CD4-positive, alpha-beta T cell (primary cell): ENCODE measurements at regions of chr19 and their contacts with region 1.

Region 1: DNA sequence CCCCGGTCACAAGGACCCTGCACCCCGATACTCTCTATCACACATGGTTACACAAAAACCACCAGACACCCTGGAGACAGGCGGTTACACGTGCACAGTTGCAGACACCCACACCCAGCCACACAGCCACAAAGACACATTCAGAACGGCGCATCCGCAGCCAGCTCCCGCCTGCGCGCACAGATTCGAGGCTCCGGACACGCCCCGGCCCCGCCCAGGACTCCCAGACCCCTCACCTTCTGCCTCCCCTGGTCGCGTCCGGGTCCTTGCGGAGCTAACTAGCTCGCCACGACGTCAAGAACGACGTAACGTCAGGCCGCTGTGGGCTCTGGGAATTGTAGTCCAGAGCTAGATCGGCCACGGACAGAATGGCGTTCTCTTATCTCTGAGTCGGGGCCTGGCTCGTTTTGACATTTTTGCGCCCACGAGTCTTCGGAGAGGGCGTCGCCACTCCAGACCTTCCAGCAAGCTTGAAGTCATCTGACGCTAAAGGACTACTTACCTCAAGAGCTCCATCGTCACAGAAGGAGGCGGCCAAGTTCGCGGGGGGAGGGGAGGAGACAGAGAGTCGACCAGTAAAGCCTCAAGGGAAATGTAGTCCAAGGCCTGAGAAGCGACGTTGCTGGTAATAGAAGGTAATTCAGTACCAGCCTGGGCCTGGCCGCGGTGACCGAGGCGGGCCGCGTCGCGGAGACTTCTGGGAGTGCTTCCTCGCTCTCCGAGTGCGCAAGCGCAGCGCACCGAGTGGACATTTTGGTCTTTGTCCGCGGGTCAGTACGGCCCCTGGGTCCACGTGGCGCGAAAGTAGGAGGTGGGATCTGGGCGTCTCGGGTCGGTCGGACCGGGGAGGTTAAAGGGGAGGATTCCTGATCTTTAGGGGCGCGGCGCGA is at the starts of genes ZNF146 and ZNF565:
- DNase-seq: peak; percentile 90 to 99 (median 94)
- ATAC-seq: peak; percentile 84
- H3K4me3 ChIP-seq: peak within 1 kb of the TSS; percentile 86
- H3K4me3 Mint-ChIP-seq: no peak within 1 kb of the TSS
- H3K27ac ChIP-seq: peak within 1 kb of the TSS; percentile 93 to 99
- H3K27ac Mint-ChIP-seq: no peak within 1 kb of the TSS
- H3K4me1 ChIP-seq: peaks cover 28% of the 10 kb centered on the region
- H3K4me1 Mint-ChIP-seq: peaks cover 17% of the 10 kb centered on the region
- H3K27me3 ChIP-seq: no peaks in the 10 kb centered on the region
- H3K27me3 Mint-ChIP-seq: no peaks in the 10 kb centered on the region
- CTCF ChIP-seq: no peak
- total RNA-seq, gene ZNF146: 13.6 to 13.7 TPM
- total RNA-seq, gene ZNF565: 7.6 to 8.5 TPM

Region 2: DNA sequence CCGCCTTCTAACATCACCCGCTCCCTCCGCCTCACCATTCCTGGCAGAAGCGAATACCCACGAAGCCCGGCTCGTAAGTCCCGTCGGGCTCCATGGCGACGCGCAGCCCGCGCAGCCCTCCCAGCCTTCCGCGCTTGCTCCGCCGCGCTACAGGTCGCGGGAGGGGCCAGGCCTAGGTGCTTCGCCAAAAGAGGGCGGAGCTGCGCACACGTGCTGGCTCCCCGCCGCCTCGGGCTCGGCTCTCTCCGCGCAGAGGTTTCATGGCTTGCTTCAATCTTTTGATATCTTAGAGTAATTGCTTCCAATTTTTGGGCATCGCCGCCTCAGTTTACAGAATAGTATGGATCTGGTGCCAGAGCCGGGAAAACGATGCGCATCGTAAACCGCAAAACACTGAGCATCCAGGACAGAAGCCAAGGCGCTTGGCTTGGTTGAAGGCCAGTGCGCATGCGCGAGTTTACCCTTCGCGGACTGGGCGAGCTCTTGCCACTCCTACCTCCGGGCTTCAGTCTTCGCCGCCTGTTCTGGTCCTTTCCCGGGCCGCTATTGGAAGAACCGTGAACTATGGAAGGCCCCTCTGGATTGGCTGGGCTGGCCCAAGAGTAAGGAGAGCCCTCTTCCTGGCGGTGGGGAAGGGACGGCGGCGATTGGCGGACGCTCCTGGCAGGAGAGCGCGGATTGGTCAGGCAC is 99.7 kb before region 1 on chr19 and contains the start of gene POLR2I:
- CTCF ChIA-PET with region 1: interaction called, 3 read pairs
- POLR2A ChIA-PET with region 1: interaction called, 34 read pairs
- intact Hi-C with region 1: no loop called
- DNase-seq: peak; percentile 96 to 100 (median 99)
- ATAC-seq: peak; percentile 86
- H3K4me3 ChIP-seq: peak within 1 kb of the TSS; percentile 97
- H3K4me3 Mint-ChIP-seq: peak within 1 kb of the TSS; percentile 94
- H3K27ac ChIP-seq: peak within 1 kb of the TSS; percentile 87 to 92
- H3K27ac Mint-ChIP-seq: peak within 1 kb of the TSS; percentile 94
- H3K4me1 ChIP-seq: peaks cover 40% of the 10 kb centered on the region
- H3K4me1 Mint-ChIP-seq: peaks cover 42% of the 10 kb centered on the region
- H3K27me3 ChIP-seq: no peaks in the 10 kb centered on the region
- H3K27me3 Mint-ChIP-seq: no peaks in the 10 kb centered on the region
- CTCF ChIP-seq: no peak
- total RNA-seq, gene POLR2I: 29.2 to 31.1 TPM

Region 3: DNA sequence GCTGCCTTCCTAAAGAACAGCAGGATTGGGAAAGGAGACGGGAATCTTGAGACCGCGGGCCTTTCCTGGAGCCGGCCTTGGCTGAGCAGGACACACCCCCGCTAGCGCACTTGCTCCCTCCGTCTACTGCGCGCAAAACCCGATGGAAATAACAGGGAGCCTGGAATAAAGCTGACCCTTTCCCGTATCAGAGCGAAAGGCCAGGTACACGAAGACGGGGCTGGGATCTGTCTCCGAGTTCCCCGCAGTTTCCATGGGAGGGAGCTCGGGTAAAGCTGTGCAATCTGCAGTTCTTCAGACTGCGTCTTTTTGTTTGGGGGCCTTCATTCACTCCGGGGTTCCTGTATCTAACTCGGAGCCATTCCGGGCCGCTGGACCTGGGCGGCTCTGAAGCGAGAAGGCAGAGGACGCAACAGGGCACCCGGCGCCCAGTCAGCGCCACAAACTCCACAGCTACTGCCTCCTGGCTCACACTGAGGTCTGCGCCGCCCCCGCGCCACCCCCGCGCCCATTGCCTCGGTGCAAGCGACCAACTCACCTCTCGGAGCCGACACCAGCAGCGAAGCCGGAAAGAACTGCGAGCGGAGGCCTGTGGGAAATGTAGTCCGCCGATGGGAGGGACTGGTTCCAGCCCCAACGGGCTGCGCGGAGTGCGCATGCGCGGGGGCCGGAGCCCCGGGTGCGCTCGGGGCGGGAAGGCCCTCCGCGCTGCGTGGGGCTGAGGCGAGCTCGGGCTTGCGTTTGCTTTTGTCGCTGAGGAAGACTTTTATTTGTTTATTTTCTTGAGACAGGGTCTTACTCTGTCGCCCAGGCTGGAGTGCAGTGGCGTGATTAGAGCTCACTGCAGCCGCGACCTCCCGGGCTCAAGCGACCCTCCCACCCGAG is 164.2 kb after region 1 on chr19 and contains the start of gene ZFP14:
- CTCF ChIA-PET with region 1: no interaction called
- POLR2A ChIA-PET with region 1: interaction called, 11 read pairs
- intact Hi-C with region 1: loop called in 1 of 2 experiments (anchors 2 kb)
- DNase-seq: peak; percentile 89 to 97 (median 93)
- ATAC-seq: peak; percentile 97
- H3K4me3 ChIP-seq: peak within 1 kb of the TSS; percentile 77
- H3K4me3 Mint-ChIP-seq: peak within 1 kb of the TSS; percentile 98
- H3K27ac ChIP-seq: peak within 1 kb of the TSS; percentile 74 to 84
- H3K27ac Mint-ChIP-seq: peak within 1 kb of the TSS; percentile 99
- H3K4me1 ChIP-seq: peaks cover 18% of the 10 kb centered on the region
- H3K4me1 Mint-ChIP-seq: peaks cover 21% of the 10 kb centered on the region
- H3K27me3 ChIP-seq: no peaks in the 10 kb centered on the region
- H3K27me3 Mint-ChIP-seq: no peaks in the 10 kb centered on the region
- CTCF ChIP-seq: peak; percentile 39
- total RNA-seq, gene ZFP14: 3.7 to 4.4 TPM

Region 4: GRCh38 chr19:36528194-36528920 is 313.7 kb after region 1 on chr19 and contains the start of gene ZNF260:
- CTCF ChIA-PET with region 1: no interaction called
- POLR2A ChIA-PET with region 1: interaction called, 12 read pairs
- intact Hi-C with region 1: loop called in 1 of 2 experiments (anchors 5 kb)
- DNase-seq: peak; percentile 82 to 97 (median 88)
- ATAC-seq: peak; percentile 87
- H3K4me3 ChIP-seq: peak within 1 kb of the TSS; percentile 80
- H3K4me3 Mint-ChIP-seq: peak within 1 kb of the TSS; percentile 97
- H3K27ac ChIP-seq: peak within 1 kb of the TSS; percentile 72 to 90
- H3K27ac Mint-ChIP-seq: peak within 1 kb of the TSS; percentile 93
- H3K4me1 ChIP-seq: peaks cover 19% of the 10 kb centered on the region
- H3K4me1 Mint-ChIP-seq: peaks cover 29% of the 10 kb centered on the region
- H3K27me3 ChIP-seq: no peaks in the 10 kb centered on the region
- H3K27me3 Mint-ChIP-seq: no peaks in the 10 kb centered on the region
- CTCF ChIP-seq: no peak
- total RNA-seq, gene ZNF260: 2.0 to 5.0 TPM

Region 5: GRCh38 chr19:36687214-36688056 is 472.8 kb after region 1 on chr19 and contains the start of gene ZNF567:
- CTCF ChIA-PET with region 1: no interaction called
- POLR2A ChIA-PET with region 1: no interaction called
- intact Hi-C with region 1: loop called in 1 of 2 experiments (anchors 10 kb)
- DNase-seq: peak; percentile 94 to 99 (median 97)
- ATAC-seq: peak; percentile 93
- H3K4me3 ChIP-seq: peak within 1 kb of the TSS; percentile 67
- H3K4me3 Mint-ChIP-seq: peak within 1 kb of the TSS; percentile 99
- H3K27ac ChIP-seq: peak within 1 kb of the TSS; percentile 47 to 56
- H3K27ac Mint-ChIP-seq: peak within 1 kb of the TSS; percentile 97
- H3K4me1 ChIP-seq: peaks cover 23% of the 10 kb centered on the region
- H3K4me1 Mint-ChIP-seq: peaks cover 40% of the 10 kb centered on the region
- H3K27me3 ChIP-seq: no peaks in the 10 kb centered on the region
- H3K27me3 Mint-ChIP-seq: no peaks in the 10 kb centered on the region
- CTCF ChIP-seq: no peak
- total RNA-seq, gene ZNF567: 7.3 to 7.6 TPM

Region 6: DNA sequence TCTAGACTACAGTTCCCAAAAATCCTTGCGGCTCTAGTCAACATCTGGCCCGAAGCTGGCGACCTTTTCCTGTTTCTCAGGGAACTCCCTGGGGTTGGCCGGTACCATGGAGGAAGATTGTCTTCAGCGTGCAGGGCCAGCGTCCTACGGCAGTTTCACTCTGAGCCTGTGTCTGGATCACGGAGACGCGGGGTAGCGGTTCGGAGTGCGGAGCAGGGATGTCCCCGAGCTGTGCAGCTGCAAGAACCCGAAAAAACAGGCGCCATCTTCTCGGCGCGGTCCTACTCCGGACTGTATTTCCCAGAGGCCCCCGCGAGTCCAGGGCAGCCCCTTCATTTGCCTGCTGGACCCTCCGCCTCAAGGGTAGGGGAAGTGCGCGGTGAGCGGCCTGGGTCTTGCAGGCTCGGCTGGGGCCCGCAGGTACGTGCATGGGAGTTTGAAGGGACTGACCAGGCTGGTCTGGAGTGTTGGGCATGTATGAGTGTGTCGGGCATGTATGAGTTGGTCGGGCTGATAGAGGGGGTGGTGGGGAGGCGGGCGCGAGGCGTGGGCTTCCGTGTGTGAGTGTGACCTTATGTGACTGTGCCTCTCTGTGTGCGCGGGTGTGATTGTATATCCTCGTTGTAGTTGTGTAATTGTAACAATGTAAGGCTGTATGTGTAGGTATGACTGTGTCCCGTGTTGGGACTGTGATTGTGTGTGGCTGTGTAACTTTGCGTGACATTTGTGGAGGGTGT is 1003.4 kb after region 1 on chr19 and contains the start of gene ZNF383:
- CTCF ChIA-PET with region 1: no interaction called
- POLR2A ChIA-PET with region 1: no interaction called
- intact Hi-C with region 1: loop called (anchors 5 kb)
- DNase-seq: peak; percentile 66 to 90 (median 78)
- ATAC-seq: peak; percentile 81
- H3K4me3 ChIP-seq: peak within 1 kb of the TSS; percentile 94
- H3K4me3 Mint-ChIP-seq: peak within 1 kb of the TSS; percentile 93
- H3K27ac ChIP-seq: peak within 1 kb of the TSS; percentile 81 to 90
- H3K27ac Mint-ChIP-seq: peak within 1 kb of the TSS; percentile 89
- H3K4me1 ChIP-seq: peaks cover 14% of the 10 kb centered on the region
- H3K4me1 Mint-ChIP-seq: peaks cover 42% of the 10 kb centered on the region
- H3K27me3 ChIP-seq: no peaks in the 10 kb centered on the region
- H3K27me3 Mint-ChIP-seq: no peaks in the 10 kb centered on the region
- CTCF ChIP-seq: no peak
- total RNA-seq, gene ZNF383: 13.1 to 15.7 TPM

Region 7: DNA sequence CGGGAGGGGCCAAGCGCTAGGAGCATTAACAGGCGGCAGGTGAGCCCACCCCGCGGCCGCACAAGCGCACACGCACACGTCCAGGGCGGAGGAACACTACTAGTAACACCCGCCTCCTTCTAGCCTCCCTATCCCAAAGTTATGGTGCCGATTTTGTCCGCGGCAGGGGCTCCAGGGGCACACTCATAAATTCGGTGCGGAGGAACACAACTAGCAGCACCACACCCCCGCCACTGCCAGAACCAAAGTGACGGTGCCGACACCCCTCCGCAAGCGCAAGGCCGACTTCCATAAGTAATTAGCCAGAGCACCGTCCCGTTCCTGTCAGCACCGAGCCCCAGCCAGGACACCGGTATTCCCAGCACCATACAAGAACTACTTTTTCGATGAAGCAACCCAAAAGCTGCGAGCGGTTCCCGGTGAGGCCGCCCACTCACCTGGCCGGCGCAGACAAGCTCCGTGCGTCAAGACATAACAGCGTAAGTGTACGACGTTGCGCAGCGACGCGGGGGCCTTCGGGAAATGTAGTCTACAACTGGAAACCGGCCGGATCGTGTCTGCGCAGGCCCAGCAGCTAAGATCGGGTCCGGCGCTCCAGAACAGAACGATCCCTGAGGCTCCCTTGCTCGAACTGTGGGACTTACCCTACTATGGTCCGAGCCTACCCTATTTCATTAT is 1379.8 kb after region 1 on chr19 and contains the starts of genes ZNF540 and ZNF571:
- CTCF ChIA-PET with region 1: no interaction called
- POLR2A ChIA-PET with region 1: interaction called, 10 read pairs
- intact Hi-C with region 1: no loop called
- DNase-seq: peak; percentile 86 to 96 (median 91)
- ATAC-seq: peak; percentile 95
- H3K4me3 ChIP-seq: peak within 1 kb of the TSS; percentile 93
- H3K4me3 Mint-ChIP-seq: peak within 1 kb of the TSS; percentile 97
- H3K27ac ChIP-seq: peak within 1 kb of the TSS; percentile 94 to 97
- H3K27ac Mint-ChIP-seq: peak within 1 kb of the TSS; percentile 98
- H3K4me1 ChIP-seq: peaks cover 15% of the 10 kb centered on the region
- H3K4me1 Mint-ChIP-seq: peaks cover 39% of the 10 kb centered on the region
- H3K27me3 ChIP-seq: no peaks in the 10 kb centered on the region
- H3K27me3 Mint-ChIP-seq: no peaks in the 10 kb centered on the region
- CTCF ChIP-seq: no peak
- total RNA-seq, gene ZNF540: 11.6 to 12.0 TPM
- total RNA-seq, gene ZNF571: 6.7 to 7.0 TPM